Activated CD8-positive, alpha-beta T cell treated with anti-CD3 and anti-CD28 coated beads for 36 hours (primary cell): ENCODE measurements at regions of chr2 and their contacts with region 1.

Region 1: DNA sequence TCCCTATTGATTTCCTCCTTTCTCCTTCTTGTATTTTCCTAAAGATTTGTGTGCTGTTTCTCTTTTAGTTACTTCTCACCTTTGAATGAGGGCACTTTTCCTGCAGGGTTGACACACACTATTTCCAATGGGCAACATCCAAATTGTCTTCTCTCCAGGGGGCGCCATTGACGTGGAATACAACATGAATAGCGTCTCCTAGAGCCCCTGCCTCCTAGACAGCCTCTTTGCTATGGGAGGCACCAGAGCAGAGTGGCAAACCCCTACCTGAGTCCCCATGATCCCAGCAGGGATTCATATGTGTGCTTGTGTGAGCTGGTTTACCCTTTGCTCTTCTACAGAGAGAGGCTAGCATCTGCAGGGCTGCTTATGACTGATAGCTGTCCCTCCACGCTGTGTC is 61.3 kb upstream of the ITSN2 start:
- DNase-seq: peak; percentile 85
- ATAC-seq: peak; percentile 69
- H3K4me3 Mint-ChIP-seq: no peak overlapping the region
- H3K27ac Mint-ChIP-seq: no peak overlapping the region
- H3K4me1 Mint-ChIP-seq: no peaks in the 10 kb centered on the region
- H3K27me3 Mint-ChIP-seq: peaks cover 1% of the 10 kb centered on the region
- CTCF ChIP-seq: peak; percentile 74

Region 2: GRCh38 chr2:24434541-24434940 is 12.9 kb after region 1 on chr2:
- CTCF ChIA-PET with region 1: interaction called, 16 read pairs
- POLR2A ChIA-PET with region 1: no interaction called
- intact Hi-C with region 1: no loop called
- DNase-seq: no peak
- ATAC-seq: no peak
- H3K4me3 Mint-ChIP-seq: no peak overlapping the region
- H3K27ac Mint-ChIP-seq: no peak overlapping the region
- H3K4me1 Mint-ChIP-seq: no peaks in the 10 kb centered on the region
- H3K27me3 Mint-ChIP-seq: no peaks in the 10 kb centered on the region
- CTCF ChIP-seq: no peak

Region 3: GRCh38 chr2:24454294-24454693 is 32.6 kb after region 1 on chr2:
- CTCF ChIA-PET with region 1: no interaction called
- POLR2A ChIA-PET with region 1: no interaction called
- intact Hi-C with region 1: no loop called
- DNase-seq: no peak
- ATAC-seq: no peak
- H3K4me3 Mint-ChIP-seq: no peak overlapping the region
- H3K27ac Mint-ChIP-seq: no peak overlapping the region
- H3K4me1 Mint-ChIP-seq: peaks cover 8% of the 10 kb centered on the region
- H3K27me3 Mint-ChIP-seq: no peaks in the 10 kb centered on the region
- CTCF ChIP-seq: no peak